ENCODE measurements at regions of chr20 and their contacts with region 1.

Region 1: GRCh38 chr20:44642203-44643153 is 9.0 kb downstream of the ADA start:
- DNase-seq: peak; percentile 45
- H3K4me3 Mint-ChIP-seq: peak overlapping the region; percentile 37
- H3K27ac Mint-ChIP-seq: peak overlapping the region; percentile 93
- H3K4me1 Mint-ChIP-seq: peaks cover 76% of the 10 kb centered on the region
- H3K27me3 Mint-ChIP-seq: no peaks in the 10 kb centered on the region

Region 2: GRCh38 chr20:44540834-44541233 is 101.6 kb before region 1 on chr20:
- CTCF ChIA-PET with region 1: no interaction called
- POLR2A ChIA-PET with region 1: no interaction called
- DNase-seq: no peak
- H3K4me3 Mint-ChIP-seq: no peak overlapping the region
- H3K27ac Mint-ChIP-seq: no peak overlapping the region
- H3K4me1 Mint-ChIP-seq: no peaks in the 10 kb centered on the region
- H3K27me3 Mint-ChIP-seq: peaks cover 6% of the 10 kb centered on the region

Region 3: GRCh38 chr20:44552950-44553908 is 89.2 kb before region 1 on chr20:
- CTCF ChIA-PET with region 1: no interaction called
- POLR2A ChIA-PET with region 1: no interaction called
- DNase-seq: no peak
- H3K4me3 Mint-ChIP-seq: no peak overlapping the region
- H3K27ac Mint-ChIP-seq: peak overlapping the region; percentile 13
- H3K4me1 Mint-ChIP-seq: peaks cover 15% of the 10 kb centered on the region
- H3K27me3 Mint-ChIP-seq: peaks cover under 1% of the 10 kb centered on the region

Region 4: DNA sequence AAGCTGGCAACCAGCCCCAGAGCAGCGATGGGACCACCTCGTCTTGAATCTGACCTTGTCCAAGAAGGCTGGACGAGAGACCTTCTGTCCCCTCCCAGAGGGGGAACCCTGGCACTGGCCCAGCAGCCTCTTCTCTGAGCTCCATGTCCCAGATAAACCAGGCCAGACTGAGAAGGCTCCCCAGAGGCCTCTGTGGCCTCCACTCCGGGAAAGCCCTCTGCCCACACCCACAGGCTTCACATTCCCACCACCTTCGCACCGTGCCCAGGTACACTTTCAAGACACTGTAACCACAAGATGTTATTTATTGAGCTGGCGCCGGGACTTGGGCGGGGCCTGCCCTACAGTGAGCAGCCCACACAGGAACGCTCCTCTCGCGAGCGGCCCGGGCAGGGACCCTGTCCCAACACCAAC is 24.2 kb before region 1 on chr20:
- CTCF ChIA-PET with region 1: interaction called, 3 read pairs
- POLR2A ChIA-PET with region 1: interaction called, 17 read pairs
- DNase-seq: no peak
- H3K4me3 Mint-ChIP-seq: no peak overlapping the region
- H3K27ac Mint-ChIP-seq: no peak overlapping the region
- H3K4me1 Mint-ChIP-seq: peaks cover 36% of the 10 kb centered on the region
- H3K27me3 Mint-ChIP-seq: no peaks in the 10 kb centered on the region